AG04449 (cell line): ENCODE measurements at regions of chrX and their contacts with region 1.

Region 1: DNA sequence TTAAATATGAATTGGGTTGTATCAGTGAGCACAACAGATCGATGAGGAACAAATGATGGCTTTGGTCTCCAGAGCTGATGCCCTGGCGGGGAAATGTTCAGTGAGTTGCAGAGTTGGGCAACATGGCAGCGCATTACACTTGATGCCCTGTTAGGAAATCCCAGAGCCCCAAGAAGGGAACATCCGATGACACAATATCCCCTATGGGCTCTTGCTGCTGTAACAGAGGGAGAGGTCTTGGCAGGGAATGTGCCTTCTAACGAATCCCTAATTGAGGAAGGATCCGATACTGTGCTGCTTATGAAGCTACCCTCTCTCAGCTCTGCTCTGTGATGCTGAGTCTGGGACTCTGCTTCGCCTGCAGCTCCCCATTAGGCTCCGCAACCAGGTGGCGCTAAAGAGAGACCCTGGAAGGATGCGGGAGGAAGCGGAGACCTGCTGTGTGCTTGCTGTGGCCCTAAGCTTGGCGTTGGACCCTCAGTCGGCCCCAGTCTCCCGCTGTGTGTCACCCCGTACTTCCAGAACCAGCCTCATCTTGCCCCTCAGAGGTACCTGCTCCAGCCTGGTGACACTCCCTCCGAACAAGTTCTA is 38.9 kb downstream of the PDHA1 start:
- DNase-seq: no peak
- H3K4me3 ChIP-seq: no peak overlapping the region
- CTCF ChIP-seq: peak; percentile 68

Region 2: DNA sequence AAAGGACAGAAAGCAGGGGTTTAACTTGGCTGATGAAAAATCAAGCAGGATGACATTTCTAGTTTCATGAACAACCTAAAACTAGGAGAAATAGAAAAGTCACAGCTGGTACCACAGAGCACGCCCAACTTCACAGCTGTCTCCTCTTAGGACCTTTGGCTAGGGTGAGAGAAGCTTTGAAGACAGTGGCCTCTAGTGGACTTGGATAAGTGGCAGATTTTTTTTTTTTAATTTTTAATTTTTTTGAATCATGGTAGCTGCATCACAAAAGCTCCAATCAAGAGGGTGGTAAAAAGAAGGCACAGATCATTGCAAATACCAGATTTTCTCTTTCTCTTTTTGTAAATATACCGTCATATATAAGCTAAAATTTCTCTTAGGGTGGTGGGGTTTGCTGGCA is 152.8 kb after region 1 on chrX:
- CTCF ChIA-PET with region 1: interaction called, 17 read pairs
- POLR2A ChIA-PET with region 1: no interaction called
- DNase-seq: no peak
- H3K4me3 ChIP-seq: no peak overlapping the region
- CTCF ChIP-seq: peak; percentile 4